ENCODE measurements at regions of chr7 and their contacts with region 1.

Region 1: GRCh38 chr7:117673839-117674238 is 194.0 kb downstream of the CFTR start:
- DNase-seq: peak; percentile 56
- H3K4me3 ChIP-seq: no peak overlapping the region
- H3K27ac ChIP-seq: no peak overlapping the region
- H3K4me1 ChIP-seq: no peaks in the 10 kb centered on the region
- H3K27me3 ChIP-seq: peaks cover 0 to 2% of the 10 kb centered on the region in 2 experiments
- CTCF ChIP-seq: peak; percentile 16 to 28
- POLR2A ChIP-seq: no peak

Region 2: DNA sequence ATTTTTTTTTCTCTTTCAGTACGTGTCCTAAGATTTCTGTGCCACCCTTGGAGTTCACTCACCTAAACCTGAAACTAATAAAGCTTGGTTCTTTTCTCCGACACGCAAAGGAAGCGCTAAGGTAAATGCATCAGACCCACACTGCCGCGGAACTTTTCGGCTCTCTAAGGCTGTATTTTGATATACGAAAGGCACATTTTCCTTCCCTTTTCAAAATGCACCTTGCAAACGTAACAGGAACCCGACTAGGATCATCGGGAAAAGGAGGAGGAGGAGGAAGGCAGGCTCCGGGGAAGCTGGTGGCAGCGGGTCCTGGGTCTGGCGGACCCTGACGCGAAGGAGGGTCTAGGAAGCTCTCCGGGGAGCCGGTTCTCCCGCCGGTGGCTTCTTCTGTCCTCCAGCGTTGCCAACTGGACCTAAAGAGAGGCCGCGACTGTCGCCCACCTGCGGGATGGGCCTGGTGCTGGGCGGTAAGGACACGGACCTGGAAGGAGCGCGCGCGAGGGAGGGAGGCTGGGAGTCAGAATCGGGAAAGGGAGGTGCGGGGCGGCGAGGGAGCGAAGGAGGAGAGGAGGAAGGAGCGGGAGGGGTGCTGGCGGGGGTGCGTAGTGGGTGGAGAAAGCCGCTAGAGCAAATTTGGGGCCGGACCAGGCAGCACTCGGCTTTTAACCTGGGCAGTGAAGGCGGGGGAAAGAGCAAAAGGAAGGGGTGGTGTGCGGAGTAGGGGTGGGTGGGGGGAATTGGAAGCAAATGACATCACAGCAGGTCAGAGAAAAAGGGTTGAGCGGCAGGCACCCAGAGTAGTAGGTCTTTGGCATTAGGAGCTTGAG is 194.4 kb before region 1 on chr7 and contains the start of gene CFTR:
- CTCF ChIA-PET with region 1: no interaction called
- POLR2A ChIA-PET with region 1: no interaction called
- dilution Hi-C with region 1: no loop called
- intact Hi-C with region 1: loop called (anchors 5 kb)
- DNase-seq: no peak
- H3K4me3 ChIP-seq: peak within 1 kb of the TSS in 2 of 3 experiments; percentile 26 to 44
- H3K27ac ChIP-seq: no peak within 1 kb of the TSS
- H3K4me1 ChIP-seq: no peaks in the 10 kb centered on the region
- H3K27me3 ChIP-seq: peaks cover 32 to 48% of the 10 kb centered on the region in 2 experiments
- CTCF ChIP-seq: no peak
- POLR2A ChIP-seq: no peak
- total RNA-seq, gene CFTR: not detected in 2 replicates

Region 3: GRCh38 chr7:118311121-118311803 is 637.4 kb after region 1 on chr7:
- CTCF ChIA-PET with region 1: no interaction called
- POLR2A ChIA-PET with region 1: no interaction called
- dilution Hi-C with region 1: no loop called
- intact Hi-C with region 1: no loop called
- DNase-seq: no peak
- H3K4me3 ChIP-seq: no peak overlapping the region
- H3K27ac ChIP-seq: no peak overlapping the region
- H3K4me1 ChIP-seq: no peaks in the 10 kb centered on the region
- H3K27me3 ChIP-seq: no peaks in the 10 kb centered on the region
- CTCF ChIP-seq: no peak
- POLR2A ChIP-seq: no peak

Measured in endothelial cell of umbilical vein (primary cell).